Tibial artery (tissue), 4 donors: ENCODE measurements at regions of chr10 and their contacts with region 1.

Region 1: GRCh38 chr10:14878266-14879054 is at the start of gene SUV39H2:
- DNase-seq: peak; percentile 94 to 97
- H3K4me3 ChIP-seq: peak within 1 kb of the TSS; percentile 97 to 99
- H3K27ac ChIP-seq: peak within 1 kb of the TSS; percentile 92 to 94
- H3K4me1 ChIP-seq: peaks cover 0 to 25% (median 12%) of the 10 kb centered on the region in 4 donors
- H3K27me3 ChIP-seq: no peaks in the 10 kb centered on the region
- CTCF ChIP-seq: no peak

Region 2: GRCh38 chr10:14837757-14838581 is 40.5 kb before region 1 on chr10 and contains the starts of genes CDNF, HSPA14 and MSANTD7:
- intact Hi-C with region 1: loop called (anchors 5 kb)
- DNase-seq: peak; percentile 98 to 100
- H3K4me3 ChIP-seq: peak within 1 kb of the TSS; percentile 92 to 94
- H3K27ac ChIP-seq: peak within 1 kb of the TSS; percentile 89 to 97
- H3K4me1 ChIP-seq: peaks cover 0 to 24% (median 17%) of the 10 kb centered on the region in 4 donors
- H3K27me3 ChIP-seq: no peaks in the 10 kb centered on the region
- CTCF ChIP-seq: peak in 1 of 2 experiments; percentile 15

Region 3: DNA sequence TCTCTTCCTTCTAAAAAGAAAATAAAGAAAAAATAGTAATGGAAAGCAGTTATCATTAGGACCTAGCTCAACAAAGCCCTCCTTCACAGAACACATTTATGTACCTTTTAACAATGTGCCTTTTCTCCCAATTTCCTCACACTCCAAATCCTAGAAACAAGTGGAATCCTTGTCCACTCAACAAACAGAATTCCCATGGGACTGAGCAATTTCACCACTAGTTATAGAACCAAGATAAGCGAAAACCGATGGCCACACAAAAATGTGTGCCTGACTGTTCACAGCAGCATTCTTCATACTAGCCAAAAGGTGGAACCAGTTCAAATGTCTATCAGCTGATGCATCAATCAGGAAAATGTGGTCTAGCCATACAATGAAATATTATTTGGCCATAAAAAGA is 58.1 kb after region 1 on chr10:
- intact Hi-C with region 1: no loop called
- DNase-seq: no peak
- H3K4me3 ChIP-seq: no peak overlapping the region
- H3K27ac ChIP-seq: no peak overlapping the region
- H3K4me1 ChIP-seq: no peaks in the 10 kb centered on the region
- H3K27me3 ChIP-seq: no peaks in the 10 kb centered on the region
- CTCF ChIP-seq: no peak

Region 4: GRCh38 chr10:15168781-15169554 is 290.5 kb after region 1 on chr10:
- intact Hi-C with region 1: no loop called
- DNase-seq: peak; percentile 93 to 97
- H3K4me3 ChIP-seq: peak overlapping the region; percentile 16 to 20
- H3K27ac ChIP-seq: peak overlapping the region in 1 of 2 donors; percentile 58
- H3K4me1 ChIP-seq: peaks cover 0 to 25% (median 15%) of the 10 kb centered on the region in 4 donors
- H3K27me3 ChIP-seq: no peaks in the 10 kb centered on the region
- CTCF ChIP-seq: no peak